Head of caudate nucleus (tissue), 42 donors: ENCODE measurements at regions of chr17 and their contacts with region 1.

Region 1: GRCh38 chr17:28644985-28645939 is at the start of gene BLTP2:
- DNase-seq: peak; percentile 86 to 99 (median 97)

Region 2: DNA sequence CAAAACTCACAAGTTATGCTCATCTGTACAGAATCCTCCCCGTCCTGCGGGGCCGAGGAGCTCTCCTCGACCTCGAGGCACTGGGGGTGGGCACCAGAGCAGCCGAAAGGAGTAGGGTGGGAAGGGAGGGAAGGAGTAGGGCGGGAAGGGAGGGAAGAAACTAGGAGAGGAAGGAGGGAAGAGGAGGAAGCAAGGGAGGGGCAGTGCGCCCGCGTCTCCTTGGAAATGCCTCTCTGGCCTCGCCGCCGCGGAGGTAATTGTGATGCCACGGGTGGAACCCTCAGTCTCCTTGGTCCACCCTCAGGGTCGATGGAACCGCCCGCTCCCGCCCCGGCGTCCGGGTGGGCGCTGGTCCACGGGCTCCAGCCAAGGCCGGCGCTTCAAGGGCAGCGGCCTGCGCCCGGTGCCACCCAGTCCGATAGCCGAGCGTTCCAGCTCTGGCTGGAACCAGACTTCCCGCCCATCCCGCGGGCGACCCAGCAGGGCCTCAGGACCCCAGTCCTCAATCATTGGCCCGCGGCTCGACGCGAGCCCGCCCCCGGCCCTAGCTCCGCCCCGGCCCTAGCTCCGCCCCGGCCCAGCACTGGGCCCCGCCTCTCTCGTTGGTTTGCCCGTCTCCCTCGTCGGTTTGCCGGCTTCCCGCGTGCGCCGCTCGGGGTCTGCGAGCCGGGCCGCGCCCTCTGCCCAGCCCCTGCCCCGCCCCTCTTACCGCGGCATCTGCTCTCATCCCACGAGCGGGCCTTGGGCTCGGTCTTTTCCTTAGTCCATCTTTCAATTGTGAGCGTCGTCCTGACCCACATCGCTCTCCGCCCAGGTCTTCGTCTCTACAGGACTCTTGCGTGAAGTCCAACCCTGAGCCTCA is 65.8 kb after region 1 on chr17:
- intact Hi-C with region 1: loop called (anchors 10 kb)
- DNase-seq: peak; percentile 71 to 95 (median 89)

Region 3: GRCh38 chr17:28777178-28777577 is 131.9 kb after region 1 on chr17:
- intact Hi-C with region 1: no loop called
- DNase-seq: no peak